Endothelial cell of umbilical vein (primary cell): ENCODE measurements at regions of chr17 and their contacts with region 1.

Region 1: GRCh38 chr17:59914274-59914854 is 21.4 kb downstream of the RPS6KB1 start:
- DNase-seq: peak; percentile 46
- H3K4me3 ChIP-seq: no peak overlapping the region
- H3K27ac ChIP-seq: no peak overlapping the region
- H3K4me1 ChIP-seq: no peaks in the 10 kb centered on the region
- H3K27me3 ChIP-seq: no peaks in the 10 kb centered on the region
- CTCF ChIP-seq: peak; percentile 30 to 33
- POLR2A ChIP-seq: no peak

Region 2: DNA sequence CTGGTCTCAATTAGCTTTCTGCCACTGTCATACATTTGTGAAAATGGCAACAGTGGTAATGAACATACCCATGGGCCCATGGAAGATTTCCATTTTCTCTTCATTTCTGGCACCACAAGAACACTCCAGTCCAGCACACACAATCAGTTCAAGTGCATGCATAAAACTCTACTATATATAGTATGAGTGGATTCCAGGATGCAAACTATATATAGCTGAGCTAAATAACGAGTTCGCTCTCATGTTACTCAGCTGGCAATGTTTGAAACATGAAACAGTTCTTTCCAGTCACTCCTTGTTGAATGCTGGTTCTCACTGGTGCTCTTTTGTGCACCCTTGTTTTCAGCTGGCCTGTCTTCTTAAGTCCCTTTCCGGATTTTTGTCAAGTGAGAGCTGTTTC is 424.1 kb before region 1 on chr17:
- CTCF ChIA-PET with region 1: no interaction called
- POLR2A ChIA-PET with region 1: no interaction called
- dilution Hi-C with region 1: no loop called
- intact Hi-C with region 1: no loop called
- DNase-seq: no peak
- H3K4me3 ChIP-seq: no peak overlapping the region
- H3K27ac ChIP-seq: no peak overlapping the region
- H3K4me1 ChIP-seq: no peaks in the 10 kb centered on the region
- H3K27me3 ChIP-seq: peaks cover 3 to 5% of the 10 kb centered on the region in 2 experiments
- CTCF ChIP-seq: no peak
- POLR2A ChIP-seq: no peak

Region 3: DNA sequence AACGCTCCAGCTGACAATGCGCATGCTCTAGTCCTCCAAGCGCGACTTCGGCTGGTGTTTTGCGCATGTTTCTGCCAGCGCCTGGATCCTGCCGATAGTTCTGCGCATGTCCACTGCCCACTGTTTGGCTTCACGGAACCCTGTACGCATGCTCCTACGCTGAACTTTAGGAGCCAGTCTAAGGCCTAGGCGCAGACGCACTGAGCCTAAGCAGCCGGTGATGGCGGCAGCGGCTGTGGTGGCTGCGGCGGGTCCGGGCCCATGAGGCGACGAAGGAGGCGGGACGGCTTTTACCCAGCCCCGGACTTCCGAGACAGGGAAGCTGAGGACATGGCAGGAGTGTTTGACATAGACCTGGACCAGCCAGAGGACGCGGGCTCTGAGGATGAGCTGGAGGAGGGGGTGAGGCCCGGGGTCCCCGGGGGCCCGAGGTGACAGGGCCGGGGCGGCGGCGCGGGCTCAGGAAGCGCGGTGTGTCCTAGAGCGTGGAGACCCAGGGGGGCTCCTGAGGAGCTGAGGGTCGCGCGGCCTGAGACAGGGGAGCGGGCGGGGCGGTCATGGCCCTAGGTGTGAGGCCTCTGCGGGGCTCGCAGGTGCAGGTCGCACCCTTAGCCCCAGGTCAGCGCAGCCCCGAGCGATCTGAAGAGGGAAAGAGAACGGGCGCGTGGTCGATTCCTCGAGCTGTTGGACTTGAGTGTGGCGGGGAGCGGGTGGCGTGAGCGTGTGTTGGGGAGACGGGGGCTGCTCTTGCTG is 21.3 kb before region 1 on chr17 and contains the starts of genes RPS6KB1 and TUBD1:
- CTCF ChIA-PET with region 1: interaction called, 16 read pairs
- POLR2A ChIA-PET with region 1: no interaction called
- dilution Hi-C with region 1: no loop called
- intact Hi-C with region 1: no loop called
- DNase-seq: peak; percentile 100
- H3K4me3 ChIP-seq: peak within 1 kb of the TSS; percentile 82 to 92 (median 91)
- H3K27ac ChIP-seq: peak within 1 kb of the TSS; percentile 42
- H3K4me1 ChIP-seq: peaks cover 11% of the 10 kb centered on the region
- H3K27me3 ChIP-seq: no peaks in the 10 kb centered on the region
- CTCF ChIP-seq: no peak
- POLR2A ChIP-seq: peak; percentile 81
- total RNA-seq, gene RPS6KB1: 40.5 and 45.7 TPM in 2 replicates
- total RNA-seq, gene TUBD1: 11.3 and 11.6 TPM in 2 replicates

Region 4: GRCh38 chr17:59899103-59899502 is 15.3 kb before region 1 on chr17:
- CTCF ChIA-PET with region 1: interaction called, 20 read pairs
- POLR2A ChIA-PET with region 1: no interaction called
- dilution Hi-C with region 1: no loop called
- intact Hi-C with region 1: no loop called
- DNase-seq: no peak
- H3K4me3 ChIP-seq: no peak overlapping the region
- H3K27ac ChIP-seq: no peak overlapping the region
- H3K4me1 ChIP-seq: peaks cover 4% of the 10 kb centered on the region
- H3K27me3 ChIP-seq: no peaks in the 10 kb centered on the region
- CTCF ChIP-seq: no peak
- POLR2A ChIP-seq: no peak

Region 5: DNA sequence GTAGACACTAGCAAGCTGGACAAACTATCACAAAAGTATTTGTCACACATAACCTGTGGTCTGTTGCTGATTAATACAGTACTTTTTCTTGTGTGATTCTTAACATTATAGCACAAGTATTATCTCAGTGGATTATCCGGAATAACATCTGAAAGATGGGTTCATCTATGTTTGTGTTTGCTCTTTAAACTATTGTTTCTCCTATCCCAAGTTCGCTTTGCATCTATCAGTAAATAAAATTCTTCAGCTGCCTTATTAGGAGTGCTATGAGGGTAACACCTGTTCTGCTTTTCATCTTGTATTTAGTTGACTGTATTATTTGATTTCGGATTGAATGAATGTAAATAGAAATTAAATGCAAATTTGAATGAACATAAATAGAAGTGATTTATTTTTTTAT is 35.7 kb after region 1 on chr17:
- CTCF ChIA-PET with region 1: interaction called, 12 read pairs
- POLR2A ChIA-PET with region 1: no interaction called
- dilution Hi-C with region 1: no loop called
- intact Hi-C with region 1: no loop called
- DNase-seq: no peak
- H3K4me3 ChIP-seq: no peak overlapping the region
- H3K27ac ChIP-seq: no peak overlapping the region
- H3K4me1 ChIP-seq: no peaks in the 10 kb centered on the region
- H3K27me3 ChIP-seq: no peaks in the 10 kb centered on the region
- CTCF ChIP-seq: no peak
- POLR2A ChIP-seq: no peak

Region 6: DNA sequence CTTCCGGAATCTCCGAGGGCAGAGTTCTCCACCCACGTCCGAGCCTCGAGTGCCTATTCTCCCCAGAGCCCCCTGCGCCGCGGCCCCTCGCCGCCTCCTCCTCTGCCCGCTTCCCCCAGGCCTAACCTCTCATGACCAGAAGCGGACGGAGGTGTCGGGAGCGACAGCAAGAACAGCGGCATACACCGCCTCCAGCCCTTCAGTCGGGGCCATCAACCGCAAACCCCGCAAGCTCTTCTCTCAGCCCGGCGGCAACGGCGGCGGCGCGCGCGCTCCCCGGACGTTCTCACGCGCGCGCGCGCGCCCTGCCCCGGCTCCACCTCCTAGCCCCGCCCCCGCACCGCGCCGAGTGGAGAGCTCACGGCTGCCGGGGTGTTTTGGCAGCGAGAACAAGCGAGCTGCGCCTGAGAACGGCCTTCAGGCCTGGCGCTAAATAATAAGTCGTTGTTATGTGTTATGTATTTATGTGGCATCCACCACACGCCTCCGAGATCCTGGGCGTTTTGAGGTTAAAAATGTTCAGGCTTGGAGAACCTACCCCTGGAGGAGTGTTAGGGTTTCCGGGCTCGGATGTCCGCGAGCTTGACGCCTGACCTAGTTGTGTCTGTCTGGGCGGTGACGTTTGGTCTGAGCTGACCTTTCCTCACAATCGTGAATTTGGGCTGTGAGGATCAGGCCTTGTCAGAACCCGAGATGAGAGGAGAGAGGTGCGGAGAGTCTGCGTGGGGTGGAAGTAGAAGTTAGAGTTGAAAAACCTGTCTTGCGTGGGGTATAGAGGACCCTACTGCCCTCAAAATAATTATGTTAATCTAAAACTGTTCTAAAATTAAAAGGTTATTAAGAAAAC is 50.3 kb after region 1 on chr17 and contains the start of gene RNFT1:
- CTCF ChIA-PET with region 1: interaction called, 13 read pairs
- POLR2A ChIA-PET with region 1: no interaction called
- dilution Hi-C with region 1: no loop called
- intact Hi-C with region 1: no loop called
- DNase-seq: peak; percentile 78
- H3K4me3 ChIP-seq: peak within 1 kb of the TSS; percentile 79 to 96 (median 88)
- H3K27ac ChIP-seq: peak within 1 kb of the TSS; percentile 70
- H3K4me1 ChIP-seq: peaks cover 9% of the 10 kb centered on the region
- H3K27me3 ChIP-seq: no peaks in the 10 kb centered on the region
- CTCF ChIP-seq: no peak
- POLR2A ChIP-seq: peak; percentile 86
- total RNA-seq, gene RNFT1: 16.2 and 16.6 TPM in 2 replicates